ENCODE measurements at regions of chr11 and their contacts with region 1.

Region 1: GRCh38 chr11:29224739-29225384 is 792.0 kb downstream of the KCNA4 start:
- DNase-seq: no peak
- H3K4me3 ChIP-seq: no peak overlapping the region
- H3K27ac ChIP-seq: no peak overlapping the region
- H3K4me1 ChIP-seq: no peaks in the 10 kb centered on the region
- H3K27me3 ChIP-seq: no peaks in the 10 kb centered on the region
- CTCF ChIP-seq: no peak
- EP300 ChIP-seq: no peak
- POLR2A ChIP-seq: no peak

Region 2: DNA sequence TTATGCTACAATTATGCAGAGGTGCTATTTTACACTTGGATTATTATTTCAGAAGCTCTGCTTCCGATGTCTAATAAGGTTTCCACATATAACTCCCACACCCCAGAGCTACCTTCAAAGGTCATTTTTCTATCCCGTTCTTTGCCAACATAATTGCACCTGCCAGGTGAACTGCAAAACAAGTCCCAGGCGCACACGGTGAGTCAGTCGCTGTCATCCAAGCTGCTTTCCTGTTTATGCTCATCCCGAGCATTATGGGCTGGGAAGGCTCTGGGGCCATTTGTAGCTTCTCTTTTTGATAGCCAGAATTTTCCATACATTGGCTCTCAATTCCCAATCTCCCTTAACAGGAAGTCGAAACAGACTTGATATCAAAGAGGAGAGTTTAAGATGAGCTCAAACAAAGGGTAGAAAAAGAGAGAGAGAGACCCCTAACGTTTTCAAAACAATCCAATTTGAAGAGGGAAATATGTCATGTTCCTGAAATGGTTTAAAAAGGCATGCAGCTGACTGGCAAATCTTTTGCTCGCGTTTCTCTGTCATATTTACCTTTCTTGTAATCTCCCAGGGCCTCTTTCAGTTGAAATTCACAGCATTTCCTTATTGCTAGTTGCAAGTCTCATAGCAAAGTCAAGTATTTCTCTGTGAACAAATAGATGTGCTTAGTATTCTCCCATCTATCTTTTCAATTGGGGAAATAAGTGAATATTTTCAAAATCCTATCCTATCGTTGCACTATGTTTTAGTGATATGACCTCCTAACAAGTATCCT is 23.9 kb before region 1 on chr11:
- in situ Hi-C with region 1: no loop called
- intact Hi-C with region 1: loop called (anchors 1 kb)
- DNase-seq: peak; percentile 60
- H3K4me3 ChIP-seq: peak overlapping the region in 1 of 4 donors; percentile 25
- H3K27ac ChIP-seq: peak overlapping the region; percentile 60 to 84 (median 66)
- H3K4me1 ChIP-seq: peaks cover 0 to 11% (median 2%) of the 10 kb centered on the region in 4 donors
- H3K27me3 ChIP-seq: no peaks in the 10 kb centered on the region
- CTCF ChIP-seq: no peak
- EP300 ChIP-seq: no peak
- POLR2A ChIP-seq: no peak

Region 3: GRCh38 chr11:29389793-29390192 is 164.9 kb after region 1 on chr11:
- in situ Hi-C with region 1: no loop called
- intact Hi-C with region 1: no loop called
- DNase-seq: no peak
- H3K4me3 ChIP-seq: no peak overlapping the region
- H3K27ac ChIP-seq: no peak overlapping the region
- H3K4me1 ChIP-seq: no peaks in the 10 kb centered on the region
- H3K27me3 ChIP-seq: no peaks in the 10 kb centered on the region
- CTCF ChIP-seq: no peak
- EP300 ChIP-seq: no peak
- POLR2A ChIP-seq: no peak

Measured in transverse colon (tissue), 4 donors.